Upper lobe of right lung (tissue), 1 donor: ENCODE measurements at regions of chr9 and their contacts with region 1.

Region 1: DNA sequence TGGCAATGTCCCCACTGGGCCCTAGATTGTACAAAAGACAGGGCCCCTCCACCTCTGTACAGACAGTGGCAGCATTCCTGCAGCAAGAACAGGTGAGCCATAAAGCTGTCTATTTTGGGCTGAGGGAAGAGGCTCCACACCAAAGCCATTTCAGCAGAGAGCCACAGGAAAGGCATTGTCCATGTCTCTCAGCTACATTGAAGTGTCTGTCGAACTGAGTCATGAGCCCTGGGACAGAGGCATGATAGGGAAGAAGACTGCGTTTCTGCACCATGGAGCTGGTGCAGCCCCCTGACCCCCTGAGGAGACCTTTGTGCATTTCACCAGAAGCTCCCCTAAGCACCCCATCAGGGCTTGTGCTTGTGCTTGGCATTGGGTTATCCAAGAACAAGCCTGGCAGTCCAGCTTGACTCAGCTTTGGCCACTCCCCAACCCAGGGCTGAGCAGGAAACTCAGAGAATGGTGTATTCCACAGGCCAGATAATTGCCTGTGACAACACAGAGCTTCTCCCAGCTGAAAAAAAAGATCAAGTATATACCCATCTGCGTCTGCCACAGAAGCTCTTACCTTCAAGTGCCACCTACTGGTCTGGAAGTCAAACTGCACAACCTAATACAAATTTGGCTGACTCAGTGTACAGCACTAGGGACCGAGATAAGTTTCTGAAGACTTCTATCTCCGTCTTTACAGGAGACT is 5.9 kb upstream of the FRMD3 start:
- DNase-seq: no peak
- ATAC-seq: peak; percentile 97
- H3K4me3 ChIP-seq: no peak overlapping the region
- H3K27ac ChIP-seq: no peak overlapping the region
- H3K4me1 ChIP-seq: peaks cover under 1% of the 10 kb centered on the region
- H3K27me3 ChIP-seq: no peaks in the 10 kb centered on the region
- CTCF ChIP-seq: peak; percentile 74

Region 2: GRCh38 chr9:83334320-83334719 is 209.8 kb before region 1 on chr9:
- intact Hi-C with region 1: loop called (anchors 10 kb)
- DNase-seq: peak; percentile 88
- ATAC-seq: peak; percentile 98
- H3K4me3 ChIP-seq: no peak overlapping the region
- H3K27ac ChIP-seq: no peak overlapping the region
- H3K4me1 ChIP-seq: no peaks in the 10 kb centered on the region
- H3K27me3 ChIP-seq: no peaks in the 10 kb centered on the region
- CTCF ChIP-seq: peak; percentile 93